GM12878 (cell line): ENCODE measurements at regions of chr10 and their contacts with region 1.

Region 1: GRCh38 chr10:88565072-88565471 is 18.0 kb downstream of the RNLS start:
- DNase-seq: no peak
- ATAC-seq: peak; percentile 82
- H3K4me3 ChIP-seq: no peak overlapping the region
- H3K27ac ChIP-seq: no peak overlapping the region
- H3K4me1 ChIP-seq: no peaks in the 10 kb centered on the region
- H3K27me3 ChIP-seq: no peaks in the 10 kb centered on the region
- CTCF ChIP-seq: peak; percentile 30 to 63 (median 40); a peak in 5 of 6 replicates
- EP300 ChIP-seq: no peak
- POLR2A ChIP-seq: no peak
- RAD21 ChIP-seq: peak; percentile 73

Region 2: DNA sequence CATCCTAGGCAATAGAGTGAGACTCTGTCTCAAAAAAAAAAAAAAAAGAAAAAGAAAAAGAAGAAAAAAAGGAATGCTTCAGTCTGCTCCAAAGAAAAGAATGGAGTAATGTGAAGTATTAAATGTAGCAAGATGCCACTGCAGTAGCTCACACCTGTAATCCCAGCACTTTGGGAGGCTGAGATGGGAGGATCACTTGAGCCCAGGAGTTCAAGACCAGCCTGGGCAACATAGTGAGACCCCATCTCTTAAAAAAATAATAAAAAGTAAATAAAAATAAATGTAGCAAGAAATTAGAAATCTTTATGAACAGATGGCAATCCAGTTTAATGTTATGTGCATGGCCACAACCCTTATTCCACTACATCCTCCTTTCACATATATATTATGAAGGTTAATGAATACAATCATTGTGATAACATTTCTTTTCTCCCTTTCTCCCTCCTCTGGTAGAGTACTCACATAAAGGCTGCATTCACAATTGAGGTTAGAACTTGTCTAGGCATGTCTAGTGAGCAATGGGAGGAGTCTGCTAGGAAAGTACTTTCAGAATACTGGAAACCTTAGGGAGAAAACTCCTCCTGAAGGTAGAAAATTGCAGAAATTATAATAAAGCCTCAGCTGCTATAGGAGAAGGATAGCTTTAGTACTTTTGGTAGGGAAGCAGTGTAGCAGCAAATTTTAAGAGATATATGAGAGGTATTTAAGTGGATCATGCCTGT is 722.1 kb before region 1 on chr10:
- CTCF ChIA-PET with region 1: no interaction called
- POLR2A ChIA-PET with region 1: interaction called, 10 read pairs
- RAD21 ChIA-PET with region 1: no interaction called
- SMC1A ChIA-PET with region 1: no interaction called
- in situ Hi-C with region 1: no loop called
- intact Hi-C with region 1: no loop called
- DNase-seq: no peak
- ATAC-seq: peak; percentile 53
- H3K4me3 ChIP-seq: no peak overlapping the region
- H3K27ac ChIP-seq: peak overlapping the region; percentile 14
- H3K4me1 ChIP-seq: peaks cover 3% of the 10 kb centered on the region
- H3K27me3 ChIP-seq: no peaks in the 10 kb centered on the region
- CTCF ChIP-seq: no peak
- EP300 ChIP-seq: no peak
- POLR2A ChIP-seq: no peak
- RAD21 ChIP-seq: no peak

Region 3: DNA sequence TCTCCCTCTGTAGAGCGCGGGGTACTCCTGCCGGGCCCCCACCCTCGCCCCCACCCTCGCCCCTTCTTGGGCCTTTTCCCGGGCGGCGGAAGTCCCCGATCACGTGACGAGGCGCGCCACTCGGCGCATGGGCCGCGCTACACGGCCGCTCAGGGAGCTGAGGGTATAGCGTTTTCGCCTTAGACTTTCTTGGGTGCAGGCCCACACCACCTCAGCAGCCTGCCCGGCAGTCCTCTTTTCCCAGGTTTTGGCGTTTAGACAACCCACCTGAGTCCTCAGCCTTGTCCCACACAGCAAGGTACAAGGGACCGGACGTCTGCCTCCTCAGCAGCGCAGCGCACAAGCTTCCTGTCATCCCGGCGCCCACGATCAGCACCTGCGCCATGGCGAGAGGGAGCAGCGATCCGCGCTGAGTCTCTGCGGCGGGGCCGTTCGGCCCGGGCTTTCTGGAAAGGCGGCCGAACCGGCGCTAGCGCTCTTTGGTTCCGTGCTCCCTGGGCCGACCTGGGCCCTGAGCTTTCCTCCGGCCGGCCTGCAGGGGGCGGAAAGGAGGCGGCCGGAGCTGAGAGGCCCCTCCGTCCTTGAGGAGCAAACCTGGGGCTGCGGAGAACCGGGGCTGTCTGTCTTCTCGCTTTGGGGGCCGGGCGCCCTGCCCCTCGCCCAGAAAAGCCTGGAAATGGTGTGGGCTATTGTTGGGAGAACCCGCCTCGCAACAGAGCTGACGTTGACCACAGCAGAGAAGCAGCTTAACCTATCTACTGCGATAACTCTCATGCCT is 17.9 kb after region 1 on chr10 and contains the start of gene RNLS:
- CTCF ChIA-PET with region 1: interaction called, 86 read pairs
- POLR2A ChIA-PET with region 1: no interaction called
- RAD21 ChIA-PET with region 1: interaction called, 6 read pairs
- SMC1A ChIA-PET with region 1: interaction called, 5 read pairs
- in situ Hi-C with region 1: no loop called
- intact Hi-C with region 1: no loop called
- DNase-seq: peak; percentile 37
- ATAC-seq: peak; percentile 97
- H3K4me3 ChIP-seq: peak within 1 kb of the TSS; percentile 69
- H3K27ac ChIP-seq: peak within 1 kb of the TSS; percentile 87
- H3K4me1 ChIP-seq: peaks cover 4% of the 10 kb centered on the region; the same call in 1 of the 2 replicates
- H3K27me3 ChIP-seq: no peaks in the 10 kb centered on the region
- CTCF ChIP-seq: peak; percentile 76 to 92 (median 81)
- EP300 ChIP-seq: no peak
- POLR2A ChIP-seq: peak; percentile 91
- RAD21 ChIP-seq: peak; percentile 60
- polyA plus RNA-seq, gene RNLS: 3.7 to 4.1 TPM

Region 4: DNA sequence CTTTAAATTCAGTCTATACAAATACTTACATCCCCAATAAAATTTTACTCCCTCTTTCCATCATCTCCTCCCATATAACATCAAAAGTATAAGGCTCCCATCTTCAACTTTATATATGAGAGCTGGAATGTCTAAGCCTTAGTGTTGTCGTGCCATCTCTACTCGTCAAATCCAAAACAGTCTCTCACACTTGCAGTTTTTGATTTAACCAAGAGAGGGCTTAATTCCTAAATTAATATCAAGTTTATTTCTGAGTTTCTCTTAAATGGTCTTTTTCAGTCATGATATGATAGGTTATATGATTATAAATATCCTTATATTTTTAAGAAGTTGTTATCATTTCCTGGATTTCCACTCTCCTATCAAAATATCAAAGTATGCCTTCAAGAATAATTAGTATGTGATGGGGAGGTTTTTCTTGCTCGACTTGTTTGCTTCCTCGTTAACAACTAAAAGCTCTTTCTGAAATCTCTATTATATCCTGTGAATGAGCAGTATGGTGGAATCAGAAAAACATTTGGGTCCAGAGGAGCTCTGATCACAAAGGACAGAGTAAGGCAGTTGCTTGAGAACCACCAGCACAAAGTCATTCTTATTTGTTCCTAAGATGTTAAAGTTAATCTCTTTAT is 128.4 kb after region 1 on chr10:
- CTCF ChIA-PET with region 1: interaction called, 7 read pairs
- POLR2A ChIA-PET with region 1: no interaction called
- RAD21 ChIA-PET with region 1: interaction called, 3 read pairs
- SMC1A ChIA-PET with region 1: no interaction called
- in situ Hi-C with region 1: no loop called
- intact Hi-C with region 1: loop called (anchors 5 kb)
- DNase-seq: no peak
- ATAC-seq: no peak
- H3K4me3 ChIP-seq: no peak overlapping the region
- H3K27ac ChIP-seq: no peak overlapping the region
- H3K4me1 ChIP-seq: no peaks in the 10 kb centered on the region
- H3K27me3 ChIP-seq: no peaks in the 10 kb centered on the region
- CTCF ChIP-seq: no peak
- EP300 ChIP-seq: no peak
- POLR2A ChIP-seq: no peak
- RAD21 ChIP-seq: no peak

Region 5: GRCh38 chr10:88728107-88728763 is 163.2 kb after region 1 on chr10:
- CTCF ChIA-PET with region 1: interaction called, 15 read pairs
- POLR2A ChIA-PET with region 1: no interaction called
- RAD21 ChIA-PET with region 1: interaction called, 17 read pairs
- SMC1A ChIA-PET with region 1: interaction called, 10 read pairs
- in situ Hi-C with region 1: no loop called
- intact Hi-C with region 1: no loop called
- DNase-seq: no peak
- ATAC-seq: peak; percentile 53
- H3K4me3 ChIP-seq: no peak overlapping the region
- H3K27ac ChIP-seq: no peak overlapping the region
- H3K4me1 ChIP-seq: peaks cover 3% of the 10 kb centered on the region
- H3K27me3 ChIP-seq: no peaks in the 10 kb centered on the region
- CTCF ChIP-seq: peak; percentile 39 to 65 (median 51); a peak in 5 of 6 replicates
- EP300 ChIP-seq: no peak
- POLR2A ChIP-seq: no peak
- RAD21 ChIP-seq: peak; percentile 79

Region 6: DNA sequence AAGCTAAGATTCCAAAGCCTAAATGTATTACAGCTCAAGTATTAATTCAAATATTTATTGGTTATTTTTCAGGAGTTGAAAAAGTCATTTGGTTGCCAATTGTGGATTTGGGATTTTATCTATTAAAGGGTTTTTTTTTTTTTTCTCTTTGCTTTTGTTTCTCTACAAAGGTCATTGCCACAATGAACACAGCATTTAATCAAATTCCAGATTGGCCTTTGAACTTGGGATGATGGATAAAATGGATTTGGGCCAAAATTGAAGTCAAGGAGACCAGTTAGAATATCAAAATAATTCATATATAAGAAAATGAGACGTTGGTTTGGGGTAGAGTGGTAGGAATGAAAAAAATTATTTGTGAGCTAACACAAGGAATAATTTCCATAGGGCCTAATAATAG is 204.3 kb after region 1 on chr10:
- CTCF ChIA-PET with region 1: no interaction called
- POLR2A ChIA-PET with region 1: no interaction called
- RAD21 ChIA-PET with region 1: no interaction called
- SMC1A ChIA-PET with region 1: no interaction called
- in situ Hi-C with region 1: no loop called
- intact Hi-C with region 1: no loop called
- DNase-seq: no peak
- ATAC-seq: no peak
- H3K4me3 ChIP-seq: no peak overlapping the region
- H3K27ac ChIP-seq: no peak overlapping the region
- H3K4me1 ChIP-seq: no peaks in the 10 kb centered on the region
- H3K27me3 ChIP-seq: no peaks in the 10 kb centered on the region
- CTCF ChIP-seq: no peak
- EP300 ChIP-seq: no peak
- POLR2A ChIP-seq: no peak
- RAD21 ChIP-seq: no peak

Region 7: GRCh38 chr10:88791924-88792323 is 226.9 kb after region 1 on chr10:
- CTCF ChIA-PET with region 1: no interaction called
- POLR2A ChIA-PET with region 1: no interaction called
- RAD21 ChIA-PET with region 1: no interaction called
- SMC1A ChIA-PET with region 1: interaction called, 5 read pairs
- in situ Hi-C with region 1: no loop called
- intact Hi-C with region 1: loop called (anchors 1 kb)
- DNase-seq: peak; percentile 17
- ATAC-seq: peak; percentile 91
- H3K4me3 ChIP-seq: no peak overlapping the region
- H3K27ac ChIP-seq: no peak overlapping the region
- H3K4me1 ChIP-seq: peaks cover 7% of the 10 kb centered on the region; the same call in 1 of the 2 replicates
- H3K27me3 ChIP-seq: no peaks in the 10 kb centered on the region
- CTCF ChIP-seq: peak; percentile 44 to 57 (median 52)
- EP300 ChIP-seq: no peak
- POLR2A ChIP-seq: no peak
- RAD21 ChIP-seq: peak; percentile 56